GM13977 (cell line): ENCODE measurements at regions of chrX and their contacts with region 1.

Region 1: GRCh38 chrX:22748093-22748999 is 251.4 kb upstream of the DDX53 start:
- DNase-seq: peak; percentile 29
- CTCF ChIP-seq: peak; percentile 79

Region 2: DNA sequence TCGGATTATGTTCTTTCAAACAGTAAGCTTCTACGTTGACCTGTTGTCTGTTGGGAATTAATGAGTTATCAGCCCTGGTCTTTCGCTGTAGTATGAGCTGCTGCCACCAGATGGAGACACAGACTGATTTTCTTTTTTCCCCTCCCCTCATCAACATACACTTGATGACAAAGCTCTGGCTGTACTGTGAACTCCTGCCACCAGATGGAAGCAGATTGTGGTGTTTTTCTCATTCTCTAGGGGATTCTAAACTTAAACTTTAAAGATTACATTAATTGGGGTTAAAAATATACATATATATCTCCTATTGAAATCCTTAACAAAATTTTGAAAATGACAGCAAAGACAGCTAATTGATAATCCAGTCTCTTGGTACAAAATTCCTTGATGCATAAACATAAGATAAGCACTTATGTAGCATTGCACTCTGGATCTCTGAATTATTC is 763.0 kb before region 1 on chrX:
- in situ Hi-C with region 1: loop called (anchors 25 kb)
- DNase-seq: peak; percentile 77
- CTCF ChIP-seq: peak; percentile 94